Ascending aorta (tissue), 2 donors: ENCODE measurements at regions of chr19 and their contacts with region 1.

Region 1: GRCh38 chr19:38711726-38712153 is 32.5 kb downstream of the CAPN12 start:
- DNase-seq: no peak
- H3K4me3 ChIP-seq: peak overlapping the region in 1 of 2 donors; percentile 1
- H3K27ac ChIP-seq: peak overlapping the region; percentile 79
- H3K4me1 ChIP-seq: peaks cover 50 to 80% of the 10 kb centered on the region in 2 donors
- H3K27me3 ChIP-seq: no peaks in the 10 kb centered on the region
- CTCF ChIP-seq: peak in 2 of 3 experiments; percentile 19 to 27

Region 2: GRCh38 chr19:37803250-37803854 is 908.4 kb before region 1 on chr19:
- intact Hi-C with region 1: no loop called
- DNase-seq: no peak
- H3K4me3 ChIP-seq: no peak overlapping the region
- H3K27ac ChIP-seq: no peak overlapping the region
- H3K4me1 ChIP-seq: no peaks in the 10 kb centered on the region
- H3K27me3 ChIP-seq: no peaks in the 10 kb centered on the region
- CTCF ChIP-seq: no peak

Region 3: DNA sequence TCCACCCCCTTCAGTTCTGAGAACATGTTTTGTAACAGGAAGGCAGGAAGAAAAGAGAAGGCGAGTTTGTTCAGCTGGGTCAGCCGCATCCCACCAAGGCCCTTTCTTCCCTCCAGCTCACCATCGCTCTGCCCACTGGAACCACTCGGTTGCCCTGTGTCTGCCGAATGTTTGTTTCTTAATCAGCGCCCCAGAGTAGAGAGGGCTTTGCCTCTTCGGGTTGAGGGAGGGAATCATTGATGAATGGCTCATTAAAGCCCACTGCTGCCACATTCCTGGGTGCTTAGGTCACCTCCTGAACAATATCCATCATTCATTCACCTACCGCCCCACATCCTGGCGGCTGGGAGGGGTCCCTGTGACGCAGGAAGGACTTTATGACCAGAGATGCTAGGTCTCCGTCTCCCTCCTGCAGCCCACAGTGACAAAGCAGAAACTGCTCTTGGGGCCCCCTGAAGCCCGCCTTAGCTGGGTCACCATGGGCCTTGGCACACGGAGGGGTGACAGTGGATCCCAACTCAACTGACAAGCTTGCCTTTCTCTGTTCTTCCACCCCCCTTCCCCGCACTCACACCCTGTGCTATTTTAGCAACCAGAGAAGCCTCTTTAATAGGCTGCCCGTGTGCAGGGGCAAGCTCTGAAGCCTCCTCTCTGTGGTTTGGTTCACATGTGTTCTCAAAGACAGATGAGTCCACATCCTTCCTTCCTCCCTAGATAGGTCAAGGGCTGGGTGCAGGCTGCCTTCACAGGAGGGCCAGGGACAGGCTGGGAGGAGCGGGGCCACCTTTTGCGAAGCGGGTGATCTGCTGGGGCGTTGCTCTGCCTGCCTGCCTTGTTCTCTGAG is 18.1 kb before region 1 on chr19:
- intact Hi-C with region 1: loop called (anchors 2 kb)
- DNase-seq: peak in 1 of 2 donors; percentile 84
- H3K4me3 ChIP-seq: peak overlapping the region in 1 of 2 donors; percentile 29
- H3K27ac ChIP-seq: peak overlapping the region; percentile 95 to 98
- H3K4me1 ChIP-seq: peaks cover 52 to 85% of the 10 kb centered on the region in 2 donors
- H3K27me3 ChIP-seq: no peaks in the 10 kb centered on the region
- CTCF ChIP-seq: no peak